ENCODE measurements at regions of chr15 and their contacts with region 1.

Region 1: GRCh38 chr15:35697549-35698299 is 151.8 kb upstream of the DPH6 start:
- DNase-seq: peak; percentile 58 to 66
- H3K4me3 ChIP-seq: no peak overlapping the region
- H3K27ac ChIP-seq: peak overlapping the region; percentile 48
- H3K4me1 ChIP-seq: peaks cover 21% of the 10 kb centered on the region
- H3K27me3 ChIP-seq: no peaks in the 10 kb centered on the region
- CTCF ChIP-seq: no peak; the same call in 1 of the 2 replicates

Region 2: DNA sequence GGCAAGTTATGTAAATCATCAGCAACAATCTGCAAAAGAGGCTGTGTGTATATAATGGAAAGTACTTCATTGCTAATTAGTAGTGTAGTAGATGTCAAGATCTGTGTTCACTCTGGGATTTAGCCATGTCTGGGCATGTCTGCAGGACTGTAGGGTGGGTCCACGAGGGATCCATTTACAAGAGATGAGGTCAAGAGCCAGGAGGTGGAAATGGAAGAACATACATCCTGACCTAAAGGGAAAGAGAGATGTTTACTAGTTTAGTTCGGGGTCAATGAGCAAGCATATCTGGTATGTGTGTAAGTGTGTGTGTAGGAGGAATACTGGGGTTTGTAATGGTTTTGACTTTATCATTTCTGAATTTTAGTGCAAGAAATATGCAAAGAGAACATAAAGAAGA is 441.2 kb before region 1 on chr15:
- CTCF ChIA-PET with region 1: no interaction called
- POLR2A ChIA-PET with region 1: no interaction called
- intact Hi-C with region 1: no loop called
- DNase-seq: no peak
- H3K4me3 ChIP-seq: no peak overlapping the region
- H3K27ac ChIP-seq: no peak overlapping the region
- H3K4me1 ChIP-seq: no peaks in the 10 kb centered on the region
- H3K27me3 ChIP-seq: no peaks in the 10 kb centered on the region
- CTCF ChIP-seq: no peak

Region 3: DNA sequence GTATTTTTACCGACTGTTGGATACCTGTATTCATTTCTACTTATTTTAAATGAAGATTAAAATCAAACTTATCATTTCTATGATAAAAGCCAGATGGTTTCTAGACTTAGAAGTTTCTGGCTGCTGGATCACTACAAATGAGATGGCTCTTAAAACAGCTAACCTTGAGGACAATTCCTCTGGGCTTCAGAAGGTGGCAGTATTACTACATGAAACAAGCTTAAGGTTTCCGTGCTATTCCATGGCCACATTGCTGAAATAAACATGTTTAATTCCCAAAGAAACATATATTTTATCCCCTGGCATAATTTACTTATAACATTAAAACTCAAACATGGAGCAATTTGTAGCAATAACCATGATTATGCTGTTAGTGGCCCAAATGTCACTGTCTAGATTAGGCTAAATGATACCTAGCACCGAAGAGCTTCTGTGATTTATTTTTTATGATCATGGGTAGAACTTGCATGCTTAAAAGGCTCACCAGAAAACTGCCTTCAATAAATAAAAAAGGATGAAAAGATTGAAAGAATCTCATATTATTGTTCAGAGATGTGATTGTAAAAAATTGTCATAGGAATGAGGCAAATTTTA is 408.6 kb before region 1 on chr15:
- CTCF ChIA-PET with region 1: no interaction called
- POLR2A ChIA-PET with region 1: no interaction called
- intact Hi-C with region 1: loop called (anchors 10 kb)
- DNase-seq: peak in 1 of 2 experiments; percentile 43
- H3K4me3 ChIP-seq: no peak overlapping the region
- H3K27ac ChIP-seq: no peak overlapping the region
- H3K4me1 ChIP-seq: peaks cover 17% of the 10 kb centered on the region; the same call in 1 of the 2 replicates
- H3K27me3 ChIP-seq: no peaks in the 10 kb centered on the region
- CTCF ChIP-seq: peak; percentile 75

Region 4: DNA sequence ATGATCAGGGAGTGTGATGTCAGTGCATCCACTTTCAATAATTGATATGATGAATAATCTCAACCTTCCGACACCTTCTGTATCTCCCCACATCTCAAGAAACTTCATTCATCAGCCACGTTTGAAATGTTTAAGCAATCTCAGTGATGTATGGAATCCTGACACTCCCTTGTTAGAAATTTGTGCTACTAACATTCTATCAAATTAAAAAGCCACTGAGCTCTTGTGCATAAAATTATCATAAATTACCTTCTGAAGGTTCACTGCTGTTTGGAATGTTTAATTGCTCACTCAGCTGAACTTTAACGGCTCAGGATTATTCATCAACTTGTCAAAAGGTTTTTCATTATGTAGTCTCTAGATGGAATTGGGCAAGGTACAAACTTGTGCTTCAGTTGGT is 43.4 kb before region 1 on chr15:
- CTCF ChIA-PET with region 1: no interaction called
- POLR2A ChIA-PET with region 1: no interaction called
- intact Hi-C with region 1: no loop called
- DNase-seq: peak in 1 of 2 experiments; percentile 35
- H3K4me3 ChIP-seq: no peak overlapping the region
- H3K27ac ChIP-seq: no peak overlapping the region
- H3K4me1 ChIP-seq: no peaks in the 10 kb centered on the region
- H3K27me3 ChIP-seq: no peaks in the 10 kb centered on the region
- CTCF ChIP-seq: no peak

Region 5: DNA sequence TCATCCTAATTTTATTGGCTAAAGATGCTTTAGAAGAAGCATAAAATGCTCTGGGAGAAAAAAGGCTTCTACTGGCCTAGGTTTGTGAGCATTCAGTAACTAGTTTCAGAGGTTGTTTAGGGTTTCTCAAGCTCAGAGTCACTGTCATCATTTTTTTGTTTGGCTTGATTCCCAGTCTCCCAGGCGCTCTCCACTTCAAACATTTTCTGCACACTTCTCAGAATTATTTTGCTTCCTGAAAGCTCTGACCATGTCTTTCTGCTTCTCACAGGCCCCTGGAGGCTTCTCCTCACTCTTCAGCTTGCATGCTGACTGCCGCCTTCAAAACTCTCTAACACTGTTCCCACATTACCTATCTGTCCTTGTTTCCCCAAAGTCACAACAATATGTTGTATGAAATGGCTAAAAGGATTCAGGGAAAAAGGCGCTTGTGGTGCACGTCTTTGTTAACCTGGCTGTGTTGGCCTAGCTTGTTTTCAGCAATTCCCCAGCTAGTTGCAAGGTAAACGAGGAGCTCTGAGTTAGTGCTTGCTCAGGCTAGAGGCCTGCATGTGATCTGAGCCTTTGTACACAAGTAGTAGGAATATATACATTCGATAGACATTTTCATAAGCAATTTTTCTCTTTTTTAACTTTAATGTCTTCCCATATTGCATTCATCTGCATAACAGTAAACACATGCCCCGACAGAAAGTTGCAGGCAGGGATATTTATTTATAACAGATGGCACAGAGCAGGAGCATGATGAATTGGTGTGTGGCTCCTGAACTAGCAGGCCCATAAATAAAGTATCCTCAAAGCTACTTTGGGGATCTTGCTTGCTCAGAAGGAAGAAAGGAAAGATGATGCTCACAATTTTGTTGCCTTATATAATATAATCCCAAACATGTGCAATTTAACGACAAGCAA is 22.6 kb before region 1 on chr15:
- CTCF ChIA-PET with region 1: no interaction called
- POLR2A ChIA-PET with region 1: no interaction called
- intact Hi-C with region 1: no loop called
- DNase-seq: no peak
- H3K4me3 ChIP-seq: no peak overlapping the region
- H3K27ac ChIP-seq: no peak overlapping the region
- H3K4me1 ChIP-seq: no peaks in the 10 kb centered on the region
- H3K27me3 ChIP-seq: no peaks in the 10 kb centered on the region
- CTCF ChIP-seq: no peak

Region 6: GRCh38 chr15:35737441-35737840 is 39.7 kb after region 1 on chr15:
- CTCF ChIA-PET with region 1: no interaction called
- POLR2A ChIA-PET with region 1: interaction called, 15 read pairs
- intact Hi-C with region 1: no loop called
- DNase-seq: no peak
- H3K4me3 ChIP-seq: no peak overlapping the region
- H3K27ac ChIP-seq: no peak overlapping the region
- H3K4me1 ChIP-seq: peaks cover 16% of the 10 kb centered on the region; the same call in 1 of the 2 replicates
- H3K27me3 ChIP-seq: no peaks in the 10 kb centered on the region
- CTCF ChIP-seq: no peak

Region 7: GRCh38 chr15:35912196-35912595 is 214.5 kb after region 1 on chr15:
- CTCF ChIA-PET with region 1: no interaction called
- POLR2A ChIA-PET with region 1: no interaction called
- intact Hi-C with region 1: loop called (anchors 10 kb)
- DNase-seq: no peak
- H3K4me3 ChIP-seq: no peak overlapping the region
- H3K27ac ChIP-seq: no peak overlapping the region
- H3K4me1 ChIP-seq: no peaks in the 10 kb centered on the region
- H3K27me3 ChIP-seq: no peaks in the 10 kb centered on the region
- CTCF ChIP-seq: no peak

Region 8: GRCh38 chr15:36370735-36371115 is 673.0 kb after region 1 on chr15:
- CTCF ChIA-PET with region 1: no interaction called
- POLR2A ChIA-PET with region 1: no interaction called
- intact Hi-C with region 1: loop called (anchors 2 kb)
- DNase-seq: peak in 1 of 2 experiments; percentile 96
- H3K4me3 ChIP-seq: no peak overlapping the region
- H3K27ac ChIP-seq: peak overlapping the region; percentile 94
- H3K4me1 ChIP-seq: peaks cover 73% of the 10 kb centered on the region
- H3K27me3 ChIP-seq: no peaks in the 10 kb centered on the region
- CTCF ChIP-seq: no peak

Region 9: GRCh38 chr15:36579792-36580431 is 882.2 kb after region 1 on chr15:
- CTCF ChIA-PET with region 1: no interaction called
- POLR2A ChIA-PET with region 1: interaction called, 11 read pairs
- intact Hi-C with region 1: no loop called
- DNase-seq: no peak
- H3K4me3 ChIP-seq: peak overlapping the region; percentile 77
- H3K27ac ChIP-seq: peak overlapping the region; percentile 88
- H3K4me1 ChIP-seq: peaks cover 32% of the 10 kb centered on the region
- H3K27me3 ChIP-seq: no peaks in the 10 kb centered on the region
- CTCF ChIP-seq: no peak

Region 10: GRCh38 chr15:37045859-37046740 is 1348.4 kb after region 1 on chr15:
- CTCF ChIA-PET with region 1: no interaction called
- POLR2A ChIA-PET with region 1: no interaction called
- intact Hi-C with region 1: loop called (anchors 10 kb)
- DNase-seq: no peak
- H3K4me3 ChIP-seq: no peak overlapping the region
- H3K27ac ChIP-seq: no peak overlapping the region
- H3K4me1 ChIP-seq: peaks cover 7% of the 10 kb centered on the region; the same call in 1 of the 2 replicates
- H3K27me3 ChIP-seq: no peaks in the 10 kb centered on the region
- CTCF ChIP-seq: no peak

Measured in PC-9 (cell line).